PC-9 (cell line): ENCODE measurements at regions of chr11 and their contacts with region 1.

Region 1: DNA sequence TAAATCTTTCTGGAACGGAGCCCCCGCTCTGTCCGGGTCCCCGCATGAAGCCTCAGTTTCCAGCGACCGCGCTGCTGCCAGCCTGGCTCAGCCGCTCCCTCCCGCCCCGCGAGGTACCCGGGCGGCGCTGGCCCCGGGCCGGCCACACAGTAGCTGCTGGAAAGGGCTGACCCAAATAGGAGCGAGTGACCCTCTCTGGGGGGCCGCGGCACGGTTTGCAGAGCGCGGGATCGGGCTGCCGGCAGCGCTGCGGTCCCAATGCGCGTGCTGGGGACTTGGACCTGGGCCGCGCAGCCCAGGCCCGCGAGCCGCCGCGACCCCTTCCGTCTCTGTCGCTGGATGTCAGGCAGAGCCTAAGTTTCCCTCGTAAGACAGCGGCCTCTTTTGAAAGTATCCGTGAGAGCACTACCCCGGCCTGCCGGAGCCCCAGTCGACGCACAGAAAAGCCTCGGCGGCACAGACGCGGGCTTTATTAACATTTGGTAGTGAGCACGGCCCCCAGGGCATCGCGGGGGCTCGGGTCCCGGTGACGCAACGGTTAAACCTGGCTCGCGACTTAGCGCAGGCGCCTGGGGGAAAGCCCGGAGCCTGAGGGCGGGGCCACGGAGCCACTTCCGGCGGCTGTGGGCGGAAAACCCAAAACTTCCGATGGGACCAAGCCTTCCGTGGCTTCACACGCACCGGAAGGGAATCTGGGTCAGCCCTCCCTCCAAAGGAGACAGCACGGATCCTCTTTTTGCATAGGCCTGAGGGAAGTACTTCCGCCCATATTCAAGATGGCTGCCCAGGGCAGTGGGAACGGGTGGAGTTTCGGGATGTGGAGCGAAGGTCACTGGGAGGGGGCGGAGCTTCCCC is 14.9 kb downstream of the BAD start:
- DNase-seq: peak; percentile 99
- H3K4me3 ChIP-seq: peak overlapping the region; percentile 63
- H3K27ac ChIP-seq: peak overlapping the region; percentile 89
- H3K4me1 ChIP-seq: peaks cover 25% of the 10 kb centered on the region
- H3K27me3 ChIP-seq: no peaks in the 10 kb centered on the region
- CTCF ChIP-seq: peak; percentile 35; the same call in 1 of the 2 replicates

Region 2: DNA sequence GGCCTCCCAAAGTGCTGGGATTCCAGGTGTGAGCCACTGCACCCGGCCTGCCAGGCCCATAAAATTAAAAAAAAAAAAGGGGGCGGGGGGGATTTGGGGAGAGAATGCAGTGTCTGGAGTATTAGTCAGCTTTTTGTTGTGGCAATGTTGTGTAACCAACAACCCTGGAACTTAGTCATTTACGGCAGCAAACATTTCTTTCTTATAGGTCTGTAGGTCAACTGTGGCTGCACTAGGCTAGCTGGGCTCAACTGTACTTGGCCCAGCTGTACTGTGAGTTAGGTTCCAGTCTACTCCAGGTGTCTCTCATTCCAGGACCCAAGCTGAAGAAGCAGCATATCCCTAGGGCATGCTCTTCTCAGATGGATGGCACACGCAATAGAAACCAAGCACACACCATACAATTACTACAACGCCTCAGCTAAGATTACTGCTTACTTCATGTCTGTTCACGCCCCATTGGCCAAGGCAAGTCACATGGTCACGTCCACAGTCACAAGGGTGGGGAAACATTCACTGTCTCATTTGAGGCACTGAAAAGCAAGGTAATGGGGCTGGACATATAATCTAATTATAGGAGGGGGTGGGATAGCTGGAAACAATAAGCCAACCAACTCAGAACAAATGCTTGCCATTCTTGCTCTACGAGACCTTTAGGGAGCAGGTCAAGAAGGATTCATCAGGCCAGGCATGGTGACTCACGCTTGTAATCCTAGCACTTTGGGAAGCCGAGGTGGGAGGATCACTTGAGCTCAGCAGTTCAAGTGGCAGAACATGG is 466.8 kb before region 1 on chr11:
- CTCF ChIA-PET with region 1: no interaction called
- POLR2A ChIA-PET with region 1: interaction called, 22 read pairs
- intact Hi-C with region 1: no loop called
- DNase-seq: peak; percentile 81 to 95
- H3K4me3 ChIP-seq: peak overlapping the region; percentile 25; the same call in 1 of the 2 replicates
- H3K27ac ChIP-seq: peak overlapping the region; percentile 89
- H3K4me1 ChIP-seq: peaks cover 46% of the 10 kb centered on the region
- H3K27me3 ChIP-seq: no peaks in the 10 kb centered on the region
- CTCF ChIP-seq: no peak

Region 3: DNA sequence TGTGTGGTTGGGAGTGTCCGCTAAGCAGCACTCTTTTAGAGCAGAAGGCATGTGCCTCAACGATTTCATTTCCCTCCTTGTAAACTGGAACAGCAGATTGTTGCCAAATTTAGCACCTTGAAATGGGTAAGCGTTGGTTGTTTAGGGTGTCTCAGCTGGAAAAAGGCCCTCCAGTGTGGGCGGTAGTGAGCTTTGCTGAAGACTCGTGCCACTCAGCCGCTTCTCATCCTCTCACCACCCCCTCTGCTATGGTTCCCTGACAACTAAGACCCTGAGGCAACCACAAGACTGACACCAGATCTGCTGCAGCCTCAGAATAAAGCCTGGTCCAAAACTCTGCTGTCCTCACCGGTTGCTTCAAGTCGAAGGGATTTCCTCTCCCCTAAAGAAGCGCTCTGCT is 73.0 kb before region 1 on chr11:
- CTCF ChIA-PET with region 1: no interaction called
- POLR2A ChIA-PET with region 1: no interaction called
- intact Hi-C with region 1: no loop called
- DNase-seq: no peak
- H3K4me3 ChIP-seq: no peak overlapping the region
- H3K27ac ChIP-seq: no peak overlapping the region
- H3K4me1 ChIP-seq: no peaks in the 10 kb centered on the region
- H3K27me3 ChIP-seq: no peaks in the 10 kb centered on the region
- CTCF ChIP-seq: no peak

Region 4: DNA sequence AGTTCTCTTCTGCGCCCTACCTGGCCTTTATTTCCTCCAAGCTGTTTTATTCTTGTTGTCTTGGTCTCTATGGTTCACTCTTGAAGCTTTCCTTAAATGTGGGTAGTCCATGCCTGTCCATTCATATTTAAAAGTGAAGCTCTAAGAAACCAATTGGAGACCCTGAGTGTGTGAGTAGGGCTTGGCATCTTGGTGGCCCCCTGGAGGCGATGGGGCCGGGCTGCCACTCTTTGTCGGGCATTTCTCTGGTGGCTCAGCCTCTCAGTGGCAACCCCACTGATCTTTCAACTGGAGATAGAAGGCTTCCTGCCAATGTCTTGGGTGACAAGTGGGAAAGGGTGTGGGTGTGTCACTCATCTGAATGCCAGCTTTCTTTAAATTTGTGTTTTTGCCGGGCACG is 52.7 kb before region 1 on chr11:
- CTCF ChIA-PET with region 1: interaction called, 3 read pairs
- POLR2A ChIA-PET with region 1: interaction called, 13 read pairs
- intact Hi-C with region 1: no loop called
- DNase-seq: no peak
- H3K4me3 ChIP-seq: no peak overlapping the region
- H3K27ac ChIP-seq: no peak overlapping the region
- H3K4me1 ChIP-seq: no peaks in the 10 kb centered on the region
- H3K27me3 ChIP-seq: no peaks in the 10 kb centered on the region
- CTCF ChIP-seq: no peak

Region 5: GRCh38 chr11:64246871-64247728 is 22.5 kb before region 1 on chr11 and contains the start of gene PPP1R14B:
- CTCF ChIA-PET with region 1: interaction called, 4 read pairs
- POLR2A ChIA-PET with region 1: interaction called, 21 read pairs
- intact Hi-C with region 1: loop called (anchors 1 kb)
- DNase-seq: peak; percentile 84 to 93
- H3K4me3 ChIP-seq: peak within 1 kb of the TSS; percentile 79
- H3K27ac ChIP-seq: peak within 1 kb of the TSS; percentile 86
- H3K4me1 ChIP-seq: peaks cover 26% of the 10 kb centered on the region
- H3K27me3 ChIP-seq: no peaks in the 10 kb centered on the region
- CTCF ChIP-seq: peak; percentile 38; the same call in 1 of the 2 replicates
- total RNA-seq, gene PPP1R14B: 385 and 435 TPM in 2 replicates

Region 6: GRCh38 chr11:64284048-64284961 is 14.7 kb after region 1 on chr11 and contains the start of gene BAD:
- CTCF ChIA-PET with region 1: interaction called, 4 read pairs
- POLR2A ChIA-PET with region 1: interaction called, 5 read pairs
- intact Hi-C with region 1: loop called (anchors 1 kb)
- DNase-seq: peak; percentile 87 to 95
- H3K4me3 ChIP-seq: peak within 1 kb of the TSS; percentile 67
- H3K27ac ChIP-seq: peak within 1 kb of the TSS; percentile 54
- H3K4me1 ChIP-seq: peaks cover 22% of the 10 kb centered on the region
- H3K27me3 ChIP-seq: no peaks in the 10 kb centered on the region
- CTCF ChIP-seq: no peak
- total RNA-seq, gene BAD: 94.3 and 94.4 TPM in 2 replicates